ENCODE measurements at regions of chr7 and their contacts with region 1.

Region 1: DNA sequence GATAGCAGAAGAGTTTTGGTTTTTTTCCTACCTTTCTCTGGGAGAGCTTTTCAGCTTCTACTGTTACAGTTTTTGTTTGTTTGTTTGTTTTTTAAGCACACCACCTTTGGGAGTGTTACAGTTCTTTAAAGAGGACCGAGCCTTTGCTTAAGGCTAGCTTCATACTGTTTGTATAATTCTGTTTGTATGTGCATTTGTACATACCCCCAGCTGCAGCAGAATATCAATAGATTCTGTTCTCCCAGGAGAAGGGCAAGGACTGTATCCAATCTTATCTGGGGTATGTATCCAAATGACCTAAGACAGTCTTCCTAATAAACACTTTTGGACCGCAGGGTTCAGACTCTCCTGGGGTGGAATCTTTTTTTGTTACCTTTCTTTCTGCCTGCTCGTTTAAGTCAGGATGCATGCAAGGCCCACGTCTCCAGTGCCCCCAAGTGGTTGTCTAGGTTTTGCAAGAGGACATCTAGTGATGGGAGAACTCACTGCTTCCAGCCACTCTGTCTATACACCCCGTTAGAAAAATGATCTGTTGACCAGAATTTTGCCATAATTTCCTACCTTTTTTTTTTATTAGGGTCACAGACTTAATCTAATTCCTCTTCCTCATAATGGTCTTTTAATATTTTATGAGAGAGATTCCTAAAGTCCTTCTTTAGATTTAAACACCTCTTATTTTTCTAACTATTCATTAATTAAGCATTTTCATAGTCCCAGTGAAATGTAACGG is 23.9 kb downstream of the NRF1 start:
- DNase-seq: peak; percentile 20 to 73 (median 64)
- ATAC-seq: peak; percentile 97
- H3K4me3 ChIP-seq: no peak overlapping the region
- H3K4me3 Mint-ChIP-seq: peak overlapping the region in 1 of 10 donors; percentile 29
- H3K27ac ChIP-seq: peak overlapping the region; percentile 18
- H3K27ac Mint-ChIP-seq: peak overlapping the region in 8 of 9 donors; percentile 2 to 85 (median 42)
- H3K4me1 ChIP-seq: peaks cover 0 to 3% of the 10 kb centered on the region in 2 donors
- H3K4me1 Mint-ChIP-seq: peaks cover 16 to 73% (median 51%) of the 10 kb centered on the region in 7 donors
- H3K27me3 ChIP-seq: no peaks in the 10 kb centered on the region
- H3K27me3 Mint-ChIP-seq: no peaks in the 10 kb centered on the region

Region 2: DNA sequence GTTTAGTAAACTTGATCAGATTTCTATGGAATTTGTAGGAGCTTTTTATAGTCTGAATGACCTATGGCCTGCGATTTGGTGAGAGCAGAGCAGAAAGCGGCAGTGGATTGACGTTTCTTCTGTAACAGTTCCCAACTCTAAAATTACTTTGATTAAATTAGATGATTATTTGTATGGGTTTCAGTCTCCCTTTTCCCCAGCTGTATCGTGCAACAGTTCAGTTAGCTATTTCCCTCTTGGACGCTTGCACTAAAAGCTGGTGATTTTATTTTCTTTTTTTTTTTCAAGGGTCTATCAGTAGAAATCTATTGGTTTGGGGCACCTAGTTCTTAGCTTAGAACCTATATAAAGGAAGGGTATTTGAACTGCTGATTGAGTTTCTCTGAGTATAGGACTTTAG is 403.8 kb before region 1 on chr7:
- CTCF ChIA-PET with region 1: no interaction called
- POLR2A ChIA-PET with region 1: no interaction called
- intact Hi-C with region 1: no loop called
- DNase-seq: no peak
- ATAC-seq: no peak
- H3K4me3 ChIP-seq: no peak overlapping the region
- H3K4me3 Mint-ChIP-seq: no peak overlapping the region
- H3K27ac ChIP-seq: no peak overlapping the region
- H3K27ac Mint-ChIP-seq: peak overlapping the region in 1 of 9 donors; percentile 62
- H3K4me1 ChIP-seq: peaks cover under 1 to 6% of the 10 kb centered on the region in 2 donors
- H3K4me1 Mint-ChIP-seq: peaks cover 2 to 68% (median 51%) of the 10 kb centered on the region in 7 donors
- H3K27me3 ChIP-seq: no peaks in the 10 kb centered on the region
- H3K27me3 Mint-ChIP-seq: no peaks in the 10 kb centered on the region

Region 3: GRCh38 chr7:129279762-129280161 is 355.7 kb before region 1 on chr7:
- CTCF ChIA-PET with region 1: no interaction called
- POLR2A ChIA-PET with region 1: no interaction called
- intact Hi-C with region 1: no loop called
- DNase-seq: no peak
- ATAC-seq: no peak
- H3K4me3 ChIP-seq: no peak overlapping the region
- H3K4me3 Mint-ChIP-seq: no peak overlapping the region
- H3K27ac ChIP-seq: no peak overlapping the region
- H3K27ac Mint-ChIP-seq: no peak overlapping the region
- H3K4me1 ChIP-seq: no peaks in the 10 kb centered on the region
- H3K4me1 Mint-ChIP-seq: peaks cover 0 to 9% (median 3%) of the 10 kb centered on the region in 7 donors
- H3K27me3 ChIP-seq: no peaks in the 10 kb centered on the region
- H3K27me3 Mint-ChIP-seq: no peaks in the 10 kb centered on the region

Region 4: DNA sequence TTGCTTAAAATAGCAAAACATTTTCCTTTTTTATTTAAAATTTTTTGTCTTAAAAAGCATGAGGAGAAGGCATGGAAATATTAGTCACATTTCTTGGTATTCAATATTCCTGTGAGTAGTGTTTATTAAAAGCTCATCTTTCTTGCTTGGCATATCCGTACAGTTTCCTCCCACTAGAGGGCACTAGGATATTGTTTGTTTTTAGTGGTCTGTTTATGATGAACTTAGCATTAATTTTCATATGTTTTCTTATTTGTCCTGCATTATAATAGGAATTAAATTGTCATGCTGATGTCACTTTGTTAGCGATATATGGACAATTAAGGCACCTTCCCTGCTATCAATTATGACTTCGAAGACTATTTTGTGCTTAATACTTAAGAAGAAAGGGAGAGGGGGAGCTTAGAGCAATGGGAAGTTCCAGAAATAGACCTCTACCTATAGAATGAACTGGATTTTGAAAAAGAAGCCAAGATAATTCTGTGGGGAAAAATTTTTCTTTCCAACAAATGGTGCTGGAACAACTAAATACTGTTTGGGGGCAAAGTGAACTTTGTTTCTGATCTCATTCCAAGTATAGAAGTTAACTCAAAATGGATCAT is 292.3 kb before region 1 on chr7:
- CTCF ChIA-PET with region 1: no interaction called
- POLR2A ChIA-PET with region 1: no interaction called
- intact Hi-C with region 1: loop called (anchors 1 to 2 kb)
- DNase-seq: peak in 7 of 9 donors; percentile 7 to 37 (median 22)
- ATAC-seq: peak; percentile 61
- H3K4me3 ChIP-seq: no peak overlapping the region
- H3K4me3 Mint-ChIP-seq: no peak overlapping the region
- H3K27ac ChIP-seq: no peak overlapping the region
- H3K27ac Mint-ChIP-seq: no peak overlapping the region
- H3K4me1 ChIP-seq: no peaks in the 10 kb centered on the region
- H3K4me1 Mint-ChIP-seq: peaks cover 6 to 35% (median 19%) of the 10 kb centered on the region in 7 donors
- H3K27me3 ChIP-seq: no peaks in the 10 kb centered on the region
- H3K27me3 Mint-ChIP-seq: no peaks in the 10 kb centered on the region

Region 5: DNA sequence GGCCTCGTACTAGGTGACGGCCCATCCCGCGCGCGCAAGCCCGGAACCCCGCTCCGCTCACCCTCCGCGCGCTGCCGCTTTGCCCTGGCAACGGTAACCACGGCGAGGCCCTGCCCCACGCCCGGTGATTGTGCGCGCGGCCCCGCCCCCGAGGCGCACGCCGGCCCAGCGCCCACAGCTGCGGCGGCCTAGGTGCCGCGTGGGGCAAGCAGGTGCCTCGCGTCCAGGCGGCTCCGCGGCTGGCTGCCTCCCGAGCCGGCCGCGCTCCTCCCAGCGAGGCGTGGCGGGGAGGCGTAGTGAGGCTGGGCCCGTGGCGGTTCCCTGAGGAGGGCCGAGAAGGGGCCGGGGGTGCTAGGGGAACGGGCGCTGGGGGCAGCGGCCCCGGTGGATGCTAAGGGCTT is 133.1 kb before region 1 on chr7 and contains the start of gene SMKR1:
- CTCF ChIA-PET with region 1: no interaction called
- POLR2A ChIA-PET with region 1: no interaction called
- intact Hi-C with region 1: loop called (anchors 1 to 5 kb)
- DNase-seq: peak; percentile 86 to 94 (median 91)
- ATAC-seq: peak; percentile 98
- H3K4me3 ChIP-seq: peak within 1 kb of the TSS; percentile 64
- H3K4me3 Mint-ChIP-seq: peak within 1 kb of the TSS; percentile 75 to 91 (median 86)
- H3K27ac ChIP-seq: peak within 1 kb of the TSS; percentile 70
- H3K27ac Mint-ChIP-seq: peak within 1 kb of the TSS; percentile 70 to 93 (median 83)
- H3K4me1 ChIP-seq: peaks cover 4 to 7% of the 10 kb centered on the region in 2 donors
- H3K4me1 Mint-ChIP-seq: peaks cover 14 to 22% (median 16%) of the 10 kb centered on the region in 7 donors
- H3K27me3 ChIP-seq: no peaks in the 10 kb centered on the region
- H3K27me3 Mint-ChIP-seq: peaks cover 0 to 23% (median 0%) of the 10 kb centered on the region in 5 donors
- total RNA-seq, gene SMKR1: 1.1 to 2.5 (median 1.4) TPM

Region 6: GRCh38 chr7:129578829-129579228 is 56.6 kb before region 1 on chr7:
- CTCF ChIA-PET with region 1: interaction called, 5 read pairs
- POLR2A ChIA-PET with region 1: no interaction called
- intact Hi-C with region 1: loop called in 1 of 2 experiments (anchors 1 kb)
- DNase-seq: no peak
- ATAC-seq: no peak
- H3K4me3 ChIP-seq: no peak overlapping the region
- H3K4me3 Mint-ChIP-seq: no peak overlapping the region
- H3K27ac ChIP-seq: no peak overlapping the region
- H3K27ac Mint-ChIP-seq: no peak overlapping the region
- H3K4me1 ChIP-seq: no peaks in the 10 kb centered on the region
- H3K4me1 Mint-ChIP-seq: no peaks in the 10 kb centered on the region
- H3K27me3 ChIP-seq: no peaks in the 10 kb centered on the region
- H3K27me3 Mint-ChIP-seq: peaks cover 0 to 8% (median 0%) of the 10 kb centered on the region in 5 donors

Region 7: DNA sequence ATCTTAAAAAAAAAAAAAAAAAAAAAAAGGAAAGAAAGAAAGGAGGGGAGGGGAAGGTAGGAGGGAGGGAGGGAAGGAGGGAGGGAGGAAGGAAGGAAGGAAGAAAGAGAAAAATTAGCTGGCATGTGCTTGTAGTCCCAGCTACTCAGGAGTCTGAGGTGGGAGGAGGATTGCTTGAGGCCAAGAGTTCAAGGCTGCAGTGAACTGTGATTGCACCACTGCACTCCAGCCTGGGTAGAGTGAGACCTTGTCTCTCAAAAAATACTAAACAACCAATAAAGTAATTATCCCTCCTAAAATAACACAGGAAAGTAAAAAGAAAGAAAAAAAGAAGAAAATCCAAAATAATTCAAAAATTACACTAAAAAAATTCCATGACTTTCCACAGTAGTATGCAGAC is 37.8 kb before region 1 on chr7:
- CTCF ChIA-PET with region 1: no interaction called
- POLR2A ChIA-PET with region 1: no interaction called
- intact Hi-C with region 1: loop called in 1 of 2 experiments (anchors 5 kb)
- DNase-seq: no peak
- ATAC-seq: no peak
- H3K4me3 ChIP-seq: no peak overlapping the region
- H3K4me3 Mint-ChIP-seq: no peak overlapping the region
- H3K27ac ChIP-seq: no peak overlapping the region
- H3K27ac Mint-ChIP-seq: no peak overlapping the region
- H3K4me1 ChIP-seq: no peaks in the 10 kb centered on the region
- H3K4me1 Mint-ChIP-seq: peaks cover 0 to 8% (median 3%) of the 10 kb centered on the region in 7 donors
- H3K27me3 ChIP-seq: no peaks in the 10 kb centered on the region
- H3K27me3 Mint-ChIP-seq: no peaks in the 10 kb centered on the region

Region 8: GRCh38 chr7:129611246-129612111 is 24.0 kb before region 1 on chr7 and contains the start of gene NRF1:
- CTCF ChIA-PET with region 1: interaction called, 3 read pairs
- POLR2A ChIA-PET with region 1: interaction called, 4 read pairs
- intact Hi-C with region 1: loop called (anchors 1 kb)
- DNase-seq: peak; percentile 89 to 97 (median 94)
- ATAC-seq: peak; percentile 92
- H3K4me3 ChIP-seq: peak within 1 kb of the TSS; percentile 87
- H3K4me3 Mint-ChIP-seq: peak within 1 kb of the TSS; percentile 88 to 99 (median 96)
- H3K27ac ChIP-seq: peak within 1 kb of the TSS; percentile 82
- H3K27ac Mint-ChIP-seq: peak within 1 kb of the TSS; percentile 92 to 99 (median 96)
- H3K4me1 ChIP-seq: peaks cover 24 to 38% of the 10 kb centered on the region in 2 donors
- H3K4me1 Mint-ChIP-seq: peaks cover 37 to 79% (median 67%) of the 10 kb centered on the region in 7 donors
- H3K27me3 ChIP-seq: no peaks in the 10 kb centered on the region
- H3K27me3 Mint-ChIP-seq: no peaks in the 10 kb centered on the region
- total RNA-seq, gene NRF1: 25.8 to 49.3 (median 35.3) TPM

Region 9: DNA sequence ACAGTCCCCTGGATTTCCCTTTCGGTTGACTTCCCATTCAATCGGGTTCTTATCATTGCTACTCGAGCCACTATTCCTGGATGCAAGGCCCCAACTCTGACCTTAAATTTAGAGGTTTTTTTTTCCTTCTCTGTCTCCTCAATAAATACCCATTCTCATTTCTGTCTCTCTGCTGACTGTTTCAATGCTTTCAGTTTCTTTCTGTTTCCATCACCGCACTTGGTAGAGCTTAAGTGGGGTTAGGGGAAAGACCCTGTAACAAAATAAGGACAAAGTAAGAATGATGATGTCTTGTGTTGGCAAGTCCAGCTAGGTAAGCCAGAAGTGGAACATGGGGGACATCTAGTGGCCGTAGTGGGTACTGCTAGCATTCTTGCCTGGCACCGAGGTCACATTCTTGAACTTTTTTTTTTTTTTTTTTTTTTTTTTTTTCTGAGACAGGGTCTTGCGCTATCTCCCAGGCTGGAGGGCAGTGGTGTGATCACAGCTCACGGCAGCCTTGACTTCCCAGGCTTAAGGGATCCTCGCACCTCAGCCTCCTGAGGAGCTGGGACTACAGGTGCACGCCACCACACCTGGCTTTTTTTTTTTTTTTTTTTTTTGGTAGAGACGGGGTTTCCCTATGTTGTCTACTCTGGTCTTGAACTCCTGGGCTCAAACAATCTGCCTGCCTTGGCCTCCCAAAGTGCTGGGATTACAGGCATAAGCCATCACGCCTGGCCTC is 375.4 kb after region 1 on chr7:
- CTCF ChIA-PET with region 1: no interaction called
- POLR2A ChIA-PET with region 1: no interaction called
- intact Hi-C with region 1: loop called in 1 of 2 experiments (anchors 1 kb)
- DNase-seq: peak; percentile 71 to 88 (median 81)
- ATAC-seq: peak; percentile 88
- H3K4me3 ChIP-seq: no peak overlapping the region
- H3K4me3 Mint-ChIP-seq: no peak overlapping the region
- H3K27ac ChIP-seq: no peak overlapping the region
- H3K27ac Mint-ChIP-seq: peak overlapping the region in 2 of 9 donors; percentile 81 to 88
- H3K4me1 ChIP-seq: no peaks in the 10 kb centered on the region
- H3K4me1 Mint-ChIP-seq: peaks cover 0 to 9% (median 1%) of the 10 kb centered on the region in 7 donors
- H3K27me3 ChIP-seq: no peaks in the 10 kb centered on the region
- H3K27me3 Mint-ChIP-seq: no peaks in the 10 kb centered on the region

Measured in naive thymus-derived CD4-positive, alpha-beta T cell (primary cell).